ENCODE measurements at regions of chr2 and their contacts with region 1.

Region 1: DNA sequence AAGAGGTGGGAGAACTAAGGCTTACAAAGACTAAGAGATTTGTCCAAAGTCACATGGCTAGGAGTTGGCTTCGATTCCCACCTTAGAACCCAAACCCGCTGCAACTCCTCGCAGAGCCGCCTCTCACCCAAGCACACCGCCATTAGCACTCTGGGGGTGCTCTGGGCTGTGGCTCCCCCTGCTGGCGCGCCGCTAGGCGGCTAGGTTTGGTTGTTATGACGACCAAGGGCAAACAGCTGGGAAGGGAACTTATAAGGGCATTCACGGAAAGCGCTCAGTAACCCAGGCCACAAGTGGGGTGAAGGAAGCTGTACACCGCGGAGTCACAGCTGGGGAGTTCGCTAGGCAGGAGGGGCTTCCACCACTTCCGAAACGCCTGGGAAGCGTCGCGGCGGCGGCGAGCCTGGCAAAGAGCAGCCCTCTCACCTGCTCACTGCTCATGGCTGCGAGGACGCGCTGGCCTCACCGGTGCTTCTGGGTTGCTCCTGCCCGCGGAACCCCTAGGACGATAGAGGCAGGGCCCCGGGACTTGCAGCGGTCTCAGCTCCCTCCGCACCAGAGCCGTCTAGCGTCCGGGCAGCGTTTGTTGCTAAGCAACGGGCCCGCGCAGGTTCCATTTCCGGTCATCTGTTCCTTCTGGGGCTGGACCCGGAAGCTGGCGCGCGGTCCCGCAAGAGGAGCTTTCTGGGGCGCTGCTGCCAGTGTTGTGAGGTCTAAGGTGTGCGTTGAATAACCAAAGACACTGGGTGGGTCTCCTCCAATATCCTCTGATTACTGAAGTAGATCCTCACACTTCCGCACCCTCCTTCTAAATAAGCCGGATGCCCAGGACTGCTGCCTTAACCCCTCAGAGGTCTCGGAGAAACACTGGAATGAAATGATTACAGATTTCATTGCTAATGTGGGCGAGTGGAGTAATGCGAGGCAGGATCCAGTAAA is at the start of gene DNAH7:
- DNase-seq: peak; percentile 71
- H3K4me3 ChIP-seq: peak within 1 kb of the TSS; percentile 79 to 83 (median 81)
- H3K27ac ChIP-seq: peak within 1 kb of the TSS; percentile 97
- H3K4me1 ChIP-seq: peaks cover 3% of the 10 kb centered on the region
- H3K27me3 ChIP-seq: no peaks in the 10 kb centered on the region
- CTCF ChIP-seq: peak; percentile 98 to 99
- total RNA-seq, gene DNAH7: 0.56 to 1.0 TPM

Region 2: GRCh38 chr2:194819344-194819743 is 1249.2 kb before region 1 on chr2:
- CTCF ChIA-PET with region 1: no interaction called
- dilution Hi-C with region 1: no loop called
- in situ Hi-C with region 1: no loop called
- intact Hi-C with region 1: loop called (anchors 5 kb)
- DNase-seq: peak; percentile 6
- H3K4me3 ChIP-seq: no peak overlapping the region
- H3K27ac ChIP-seq: no peak overlapping the region
- H3K4me1 ChIP-seq: peaks cover 13% of the 10 kb centered on the region
- H3K27me3 ChIP-seq: no peaks in the 10 kb centered on the region
- CTCF ChIP-seq: peak; percentile 13 to 49

Region 3: GRCh38 chr2:195498176-195498575 is 570.4 kb before region 1 on chr2:
- CTCF ChIA-PET with region 1: no interaction called
- dilution Hi-C with region 1: no loop called
- in situ Hi-C with region 1: no loop called
- intact Hi-C with region 1: loop called (anchors 5 kb)
- DNase-seq: peak; percentile 26
- H3K4me3 ChIP-seq: no peak overlapping the region
- H3K27ac ChIP-seq: no peak overlapping the region
- H3K4me1 ChIP-seq: peaks cover 10% of the 10 kb centered on the region
- H3K27me3 ChIP-seq: no peaks in the 10 kb centered on the region
- CTCF ChIP-seq: peak; percentile 25 to 45

Region 4: GRCh38 chr2:195664528-195664927 is 404.0 kb before region 1 on chr2:
- CTCF ChIA-PET with region 1: interaction called, 6 read pairs
- dilution Hi-C with region 1: no loop called
- in situ Hi-C with region 1: loop called in 1 of 2 experiments (anchors 25 kb)
- intact Hi-C with region 1: loop called (anchors 2 kb)
- DNase-seq: no peak
- H3K4me3 ChIP-seq: no peak overlapping the region
- H3K27ac ChIP-seq: no peak overlapping the region
- H3K4me1 ChIP-seq: no peaks in the 10 kb centered on the region
- H3K27me3 ChIP-seq: no peaks in the 10 kb centered on the region
- CTCF ChIP-seq: peak in 1 of 2 donors; percentile 2

Region 5: GRCh38 chr2:195937176-195937575 is 131.4 kb before region 1 on chr2:
- CTCF ChIA-PET with region 1: no interaction called
- dilution Hi-C with region 1: no loop called
- in situ Hi-C with region 1: no loop called
- intact Hi-C with region 1: loop called (anchors 1 kb)
- DNase-seq: no peak
- H3K4me3 ChIP-seq: no peak overlapping the region
- H3K27ac ChIP-seq: no peak overlapping the region
- H3K4me1 ChIP-seq: no peaks in the 10 kb centered on the region
- H3K27me3 ChIP-seq: no peaks in the 10 kb centered on the region
- CTCF ChIP-seq: no peak

Region 6: DNA sequence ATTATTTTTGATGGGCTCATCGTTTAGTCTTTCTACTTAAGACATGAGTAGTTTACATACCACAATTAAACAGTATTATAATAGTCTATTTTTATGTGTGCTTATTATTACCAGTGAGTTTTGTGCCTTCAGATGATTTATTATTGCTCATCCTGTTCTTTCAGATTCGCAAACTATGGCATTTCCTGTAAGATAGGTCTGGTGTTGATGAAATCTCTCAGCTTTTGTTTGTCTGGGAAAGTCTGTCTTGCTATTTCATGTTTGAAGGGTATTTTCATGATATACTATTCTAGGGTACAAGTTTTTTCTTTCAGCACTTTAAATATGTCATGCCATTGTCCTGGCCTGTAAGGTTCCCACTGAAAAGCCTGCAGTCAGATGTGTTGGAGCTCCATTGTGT is 101.2 kb before region 1 on chr2:
- CTCF ChIA-PET with region 1: no interaction called
- dilution Hi-C with region 1: no loop called
- in situ Hi-C with region 1: no loop called
- intact Hi-C with region 1: no loop called
- DNase-seq: peak; percentile 7
- H3K4me3 ChIP-seq: no peak overlapping the region
- H3K27ac ChIP-seq: no peak overlapping the region
- H3K4me1 ChIP-seq: no peaks in the 10 kb centered on the region
- H3K27me3 ChIP-seq: no peaks in the 10 kb centered on the region
- CTCF ChIP-seq: no peak

Region 7: DNA sequence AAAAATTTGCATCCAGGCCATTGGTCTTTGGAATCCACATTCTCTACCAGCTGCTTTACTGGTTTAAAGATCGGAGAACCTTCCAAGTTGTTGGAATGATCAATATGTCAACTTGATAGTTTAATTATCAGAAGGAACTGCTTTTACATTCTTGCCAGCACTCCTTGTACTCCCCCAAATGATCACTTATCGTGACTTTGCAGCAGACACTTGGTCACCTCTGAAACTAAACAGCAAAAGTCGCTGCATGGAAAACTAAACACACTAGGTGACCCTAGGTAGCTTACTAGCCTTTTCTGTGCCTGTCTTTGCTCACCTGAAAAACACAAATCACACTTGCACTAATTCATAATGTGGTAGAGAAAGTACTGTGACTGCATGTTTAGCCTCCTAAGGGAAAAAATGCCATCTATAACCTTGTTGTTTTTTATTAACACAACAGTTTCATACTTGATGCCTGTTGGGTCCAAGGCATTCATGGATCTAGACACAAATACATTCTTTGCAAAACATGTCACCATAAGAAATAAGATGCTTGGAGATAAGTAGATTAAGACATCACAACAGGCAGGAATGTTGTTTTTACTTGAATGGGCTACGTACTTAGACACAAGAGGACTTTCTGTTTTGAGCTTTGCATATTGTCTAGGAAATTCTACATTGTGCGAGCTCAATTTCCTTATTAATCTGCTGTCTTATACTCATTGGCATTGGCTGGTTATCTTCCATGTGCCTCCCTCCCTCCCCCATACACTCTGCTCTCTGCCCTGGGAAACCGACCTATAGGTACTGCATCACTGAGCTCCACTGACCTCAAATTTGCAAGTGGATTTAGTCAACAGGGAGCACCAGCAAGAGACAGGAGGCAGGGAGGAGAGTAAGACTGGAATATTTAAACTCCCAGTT is 322.0 kb after region 1 on chr2:
- CTCF ChIA-PET with region 1: no interaction called
- dilution Hi-C with region 1: no loop called
- in situ Hi-C with region 1: no loop called
- intact Hi-C with region 1: no loop called
- DNase-seq: no peak
- H3K4me3 ChIP-seq: no peak overlapping the region
- H3K27ac ChIP-seq: no peak overlapping the region
- H3K4me1 ChIP-seq: no peaks in the 10 kb centered on the region
- H3K27me3 ChIP-seq: no peaks in the 10 kb centered on the region
- CTCF ChIP-seq: no peak

Region 8: GRCh38 chr2:197011799-197012641 is 943.5 kb after region 1 on chr2:
- CTCF ChIA-PET with region 1: no interaction called
- dilution Hi-C with region 1: no loop called
- in situ Hi-C with region 1: no loop called
- intact Hi-C with region 1: no loop called
- DNase-seq: peak; percentile 32
- H3K4me3 ChIP-seq: no peak overlapping the region
- H3K27ac ChIP-seq: no peak overlapping the region
- H3K4me1 ChIP-seq: peaks cover 4% of the 10 kb centered on the region
- H3K27me3 ChIP-seq: no peaks in the 10 kb centered on the region
- CTCF ChIP-seq: peak; percentile 73 to 83

Measured in mammary epithelial cell (primary cell).